CD4-positive, alpha-beta memory T cell (primary cell): ENCODE measurements at regions of chr11 and their contacts with region 1.

Region 1: DNA sequence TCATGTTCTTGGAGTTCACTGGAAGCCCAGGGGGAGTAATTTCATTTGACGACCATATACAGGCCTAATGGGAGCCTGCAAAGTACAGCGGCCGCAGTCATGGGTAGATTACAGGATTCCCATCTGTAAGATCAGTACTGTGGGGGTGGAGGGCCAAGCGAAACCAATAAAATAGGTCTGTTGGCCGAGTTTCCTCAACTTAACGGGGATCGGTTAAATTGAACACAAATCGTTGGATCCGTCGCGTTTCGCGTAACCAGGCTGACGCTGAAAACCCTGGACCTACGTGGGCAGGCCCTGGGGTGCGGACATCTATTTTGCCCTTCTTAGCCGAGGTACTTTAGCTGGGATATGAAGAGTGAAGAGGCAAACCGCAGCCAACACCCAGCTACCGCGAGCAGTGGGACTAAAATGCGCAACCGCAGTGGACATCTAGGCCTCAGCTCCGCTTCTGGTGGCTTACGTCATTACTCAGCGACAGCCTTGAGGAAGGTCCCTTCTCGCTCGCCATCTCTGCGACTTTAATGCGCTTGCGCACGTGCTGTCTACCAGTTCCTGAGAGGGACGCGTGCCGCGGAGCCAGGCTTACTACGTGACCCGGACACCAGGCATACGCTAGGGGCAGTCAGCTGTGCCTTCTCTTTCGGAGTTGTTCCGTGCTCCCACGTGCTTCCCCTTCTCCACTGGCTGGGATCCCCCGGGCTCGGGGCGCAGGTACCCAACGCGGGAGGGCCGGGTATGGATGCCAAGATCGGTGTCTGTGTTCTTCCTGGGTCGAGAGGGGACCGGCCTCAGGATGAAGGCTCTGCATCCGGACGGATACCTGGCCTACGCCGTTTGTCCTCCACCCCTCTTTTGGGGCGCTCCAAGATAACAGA is at the start of gene NAT10:
- DNase-seq: peak; percentile 96 to 98 (median 97)
- H3K4me3 ChIP-seq: peak within 1 kb of the TSS; percentile 83 to 86
- H3K4me3 Mint-ChIP-seq: peak within 1 kb of the TSS; percentile 95 to 98 (median 97)
- H3K27ac ChIP-seq: peak within 1 kb of the TSS; percentile 90
- H3K27ac Mint-ChIP-seq: peak within 1 kb of the TSS; percentile 99 to 100 (median 99)
- H3K4me1 ChIP-seq: peaks cover 31% of the 10 kb centered on the region
- H3K4me1 Mint-ChIP-seq: peaks cover 41 to 67% (median 51%) of the 10 kb centered on the region in 4 donors
- H3K27me3 ChIP-seq: no peaks in the 10 kb centered on the region
- H3K27me3 Mint-ChIP-seq: peaks cover 0 to 2% of the 10 kb centered on the region in 2 donors
- total RNA-seq, gene NAT10: 73.6 to 81.5 TPM

Region 2: DNA sequence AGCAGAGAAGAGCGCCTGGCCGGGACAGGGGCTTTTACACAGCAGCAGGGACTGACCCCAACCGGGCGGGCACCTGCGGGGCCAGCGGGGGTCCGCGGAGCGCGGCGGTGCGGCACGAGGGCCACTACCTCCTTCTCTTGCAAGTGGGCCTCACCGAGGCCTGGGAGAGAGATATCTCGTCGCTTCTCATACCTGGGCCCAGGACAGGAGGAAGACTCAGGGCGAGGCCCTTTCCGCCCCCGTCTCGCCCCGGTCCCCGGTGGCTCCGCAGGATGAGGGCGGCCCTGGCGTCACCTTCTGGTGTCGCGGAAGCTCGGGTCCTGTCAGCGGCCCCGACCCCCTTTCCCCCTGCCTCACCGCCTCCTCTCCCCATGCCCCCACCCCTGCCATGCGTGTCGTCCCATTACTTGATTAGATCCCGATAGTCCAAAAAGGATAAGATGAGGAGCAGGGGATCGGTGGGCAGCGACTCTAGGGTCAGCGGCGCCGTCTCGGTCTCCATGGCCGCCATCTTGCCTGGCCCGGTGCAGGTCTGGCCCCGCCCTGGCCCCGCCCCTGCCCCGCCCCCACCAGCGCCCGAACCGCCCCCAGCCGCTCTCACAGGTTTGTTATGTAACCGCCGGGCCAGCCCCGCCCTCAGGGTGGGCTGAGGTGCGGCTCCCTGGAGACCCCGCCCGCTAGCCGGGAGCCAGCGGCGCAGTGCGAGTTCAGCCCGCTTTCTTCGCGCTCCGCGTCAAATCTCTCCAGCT is 331.2 kb before region 1 on chr11 and contains the start of gene FBXO3:
- CTCF ChIA-PET with region 1: interaction called, 3 read pairs
- POLR2A ChIA-PET with region 1: no interaction called
- intact Hi-C with region 1: loop called (anchors 10 kb)
- DNase-seq: peak; percentile 88 to 89 (median 89)
- H3K4me3 ChIP-seq: peak within 1 kb of the TSS; percentile 85 to 90
- H3K4me3 Mint-ChIP-seq: peak within 1 kb of the TSS; percentile 93 to 99 (median 96)
- H3K27ac ChIP-seq: peak within 1 kb of the TSS; percentile 79
- H3K27ac Mint-ChIP-seq: peak within 1 kb of the TSS; percentile 94 to 99 (median 99)
- H3K4me1 ChIP-seq: peaks cover 42% of the 10 kb centered on the region
- H3K4me1 Mint-ChIP-seq: peaks cover 31 to 64% (median 49%) of the 10 kb centered on the region in 4 donors
- H3K27me3 ChIP-seq: no peaks in the 10 kb centered on the region
- H3K27me3 Mint-ChIP-seq: peaks cover 0 to 3% of the 10 kb centered on the region in 2 donors
- total RNA-seq, gene FBXO3: 55.1 to 55.6 TPM

Region 3: GRCh38 chr11:33996498-33997454 is 108.5 kb before region 1 on chr11:
- CTCF ChIA-PET with region 1: interaction called, 15 read pairs
- POLR2A ChIA-PET with region 1: interaction called, 3 read pairs
- intact Hi-C with region 1: loop called (anchors 1 kb)
- DNase-seq: peak; percentile 71 to 77 (median 72)
- H3K4me3 ChIP-seq: no peak overlapping the region
- H3K4me3 Mint-ChIP-seq: peak overlapping the region in 6 of 8 donors; percentile 4 to 73 (median 62)
- H3K27ac ChIP-seq: no peak overlapping the region
- H3K27ac Mint-ChIP-seq: no peak overlapping the region
- H3K4me1 ChIP-seq: peaks cover 8% of the 10 kb centered on the region
- H3K4me1 Mint-ChIP-seq: peaks cover 6 to 11% (median 7%) of the 10 kb centered on the region in 4 donors
- H3K27me3 ChIP-seq: no peaks in the 10 kb centered on the region
- H3K27me3 Mint-ChIP-seq: peaks cover 14 to 23% of the 10 kb centered on the region in 2 donors

Region 4: DNA sequence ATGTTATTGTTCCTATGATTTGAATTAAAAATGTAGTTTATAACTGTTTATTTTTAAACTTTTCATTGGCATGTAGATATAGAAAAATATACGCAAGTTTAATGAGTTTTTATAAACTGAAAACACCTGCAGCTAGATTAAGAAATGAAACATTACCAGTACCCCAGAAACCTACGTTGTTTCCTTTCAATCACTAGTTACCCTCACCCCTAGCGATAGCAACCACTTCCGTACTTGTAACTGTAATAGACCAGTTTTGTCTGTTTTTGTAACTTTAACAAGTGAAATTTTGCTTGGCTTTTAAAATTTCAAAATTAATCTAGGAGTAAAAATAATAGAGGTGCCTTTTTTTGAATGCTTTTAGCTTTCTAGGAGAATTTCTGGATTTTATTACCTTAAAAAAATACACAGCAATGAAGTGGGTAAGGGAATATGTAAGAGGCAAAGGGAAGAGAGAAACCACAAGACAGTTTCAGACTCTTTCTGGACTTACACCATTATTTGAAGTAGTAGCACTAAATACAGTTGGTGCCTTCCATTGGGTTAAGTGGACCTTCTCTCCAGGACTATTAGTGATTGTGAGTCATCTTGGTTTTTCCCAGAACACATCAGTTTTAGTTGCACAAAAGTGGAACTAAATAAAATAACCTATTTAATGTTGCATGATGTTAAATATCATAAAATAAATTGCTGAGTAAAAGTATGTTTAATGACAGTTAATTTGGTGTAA is 18.6 kb before region 1 on chr11:
- CTCF ChIA-PET with region 1: interaction called, 4 read pairs
- POLR2A ChIA-PET with region 1: interaction called, 14 read pairs
- intact Hi-C with region 1: loop called (anchors 1 kb)
- DNase-seq: peak in 4 of 5 donors; percentile 22 to 43 (median 30)
- H3K4me3 ChIP-seq: no peak overlapping the region
- H3K4me3 Mint-ChIP-seq: peak overlapping the region in 6 of 8 donors; percentile 25 to 67 (median 39)
- H3K27ac ChIP-seq: peak overlapping the region; percentile 35
- H3K27ac Mint-ChIP-seq: peak overlapping the region; percentile 49 to 93 (median 86)
- H3K4me1 ChIP-seq: peaks cover 15% of the 10 kb centered on the region
- H3K4me1 Mint-ChIP-seq: peaks cover 11 to 33% (median 23%) of the 10 kb centered on the region in 4 donors
- H3K27me3 ChIP-seq: no peaks in the 10 kb centered on the region
- H3K27me3 Mint-ChIP-seq: no peaks in the 10 kb centered on the region

Region 5: GRCh38 chr11:34438529-34439507 is 333.5 kb after region 1 on chr11 and contains the start of gene CAT:
- CTCF ChIA-PET with region 1: no interaction called
- POLR2A ChIA-PET with region 1: interaction called, 10 read pairs
- intact Hi-C with region 1: loop called (anchors 1 kb)
- DNase-seq: peak; percentile 96 to 97 (median 96)
- H3K4me3 ChIP-seq: peak within 1 kb of the TSS; percentile 52 to 90
- H3K4me3 Mint-ChIP-seq: peak within 1 kb of the TSS; percentile 94 to 99 (median 98)
- H3K27ac ChIP-seq: peak within 1 kb of the TSS; percentile 75
- H3K27ac Mint-ChIP-seq: peak within 1 kb of the TSS; percentile 93 to 98 (median 95)
- H3K4me1 ChIP-seq: peaks cover 28% of the 10 kb centered on the region
- H3K4me1 Mint-ChIP-seq: peaks cover 22 to 41% (median 31%) of the 10 kb centered on the region in 4 donors
- H3K27me3 ChIP-seq: no peaks in the 10 kb centered on the region
- H3K27me3 Mint-ChIP-seq: no peaks in the 10 kb centered on the region
- total RNA-seq, gene CAT: 35.1 to 38.4 TPM

Region 6: GRCh38 chr11:34916015-34916842 is 810.9 kb after region 1 on chr11 and contains the starts of genes APIP and PDHX:
- CTCF ChIA-PET with region 1: no interaction called
- POLR2A ChIA-PET with region 1: interaction called, 14 read pairs
- intact Hi-C with region 1: no loop called
- DNase-seq: peak; percentile 83 to 95 (median 85)
- H3K4me3 ChIP-seq: peak within 1 kb of the TSS; percentile 93 to 95
- H3K4me3 Mint-ChIP-seq: peak within 1 kb of the TSS; percentile 90 to 100 (median 96)
- H3K27ac ChIP-seq: peak within 1 kb of the TSS; percentile 81
- H3K27ac Mint-ChIP-seq: peak within 1 kb of the TSS; percentile 95 to 99 (median 97)
- H3K4me1 ChIP-seq: peaks cover 29% of the 10 kb centered on the region
- H3K4me1 Mint-ChIP-seq: peaks cover 31 to 55% (median 40%) of the 10 kb centered on the region in 4 donors
- H3K27me3 ChIP-seq: no peaks in the 10 kb centered on the region
- H3K27me3 Mint-ChIP-seq: no peaks in the 10 kb centered on the region
- total RNA-seq, gene APIP: 17.7 to 18.4 TPM
- total RNA-seq, gene PDHX: 39.1 to 43.5 TPM